Right ventricle myocardium superior (tissue), 1 donor: ENCODE measurements at regions of chr18 and their contacts with region 1.

Region 1: DNA sequence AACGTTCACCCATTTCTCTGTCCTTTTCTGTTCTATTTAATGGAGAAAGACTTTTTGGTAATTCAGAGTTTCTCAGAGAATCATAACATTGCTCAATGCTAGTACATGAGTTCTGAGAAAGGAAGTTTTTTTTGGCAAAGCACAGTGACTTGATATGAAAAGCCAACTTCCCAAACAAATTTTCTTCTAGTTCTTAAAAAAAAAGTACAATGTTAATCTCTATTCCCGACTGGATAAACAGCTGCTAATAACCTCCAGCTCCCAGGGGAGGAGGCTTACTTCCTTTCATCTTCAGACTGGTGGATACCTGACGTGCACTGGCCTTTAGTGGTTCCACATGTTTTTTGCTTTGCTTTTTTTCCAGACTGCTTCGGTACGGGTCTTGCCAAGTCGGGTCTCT is 284.6 kb upstream of the CCDC68 start:
- DNase-seq: no peak
- ATAC-seq: peak; percentile 83

Region 2: DNA sequence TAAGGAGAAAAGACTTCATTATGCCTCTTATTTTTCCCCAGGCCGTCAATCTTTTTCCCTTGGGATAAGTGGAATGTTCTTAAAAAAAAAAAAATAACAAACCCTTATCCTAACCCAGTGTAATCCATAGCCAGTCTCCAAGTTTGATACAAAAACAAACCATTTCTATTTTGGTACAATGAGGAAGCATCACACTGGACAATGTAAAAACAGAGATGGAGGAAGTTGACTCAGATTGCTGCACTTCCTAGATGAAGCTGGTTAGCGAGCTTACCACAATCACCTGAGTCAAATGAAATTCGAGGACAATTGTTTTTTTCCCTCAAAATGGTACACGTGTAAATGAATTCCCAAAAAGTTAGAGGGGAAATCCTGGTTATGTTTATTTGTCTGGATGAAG is 84.4 kb after region 1 on chr18:
- intact Hi-C with region 1: loop called (anchors 5 kb)
- DNase-seq: no peak
- ATAC-seq: peak; percentile 84